ENCODE measurements at regions of chr7 and their contacts with region 1.

Region 1: GRCh38 chr7:24955313-24955712 is 24.7 kb downstream of the OSBPL3 start:
- DNase-seq: no peak
- H3K4me3 Mint-ChIP-seq: no peak overlapping the region
- H3K27ac Mint-ChIP-seq: no peak overlapping the region
- H3K4me1 Mint-ChIP-seq: peaks cover 49% of the 10 kb centered on the region
- H3K27me3 Mint-ChIP-seq: no peaks in the 10 kb centered on the region

Region 2: DNA sequence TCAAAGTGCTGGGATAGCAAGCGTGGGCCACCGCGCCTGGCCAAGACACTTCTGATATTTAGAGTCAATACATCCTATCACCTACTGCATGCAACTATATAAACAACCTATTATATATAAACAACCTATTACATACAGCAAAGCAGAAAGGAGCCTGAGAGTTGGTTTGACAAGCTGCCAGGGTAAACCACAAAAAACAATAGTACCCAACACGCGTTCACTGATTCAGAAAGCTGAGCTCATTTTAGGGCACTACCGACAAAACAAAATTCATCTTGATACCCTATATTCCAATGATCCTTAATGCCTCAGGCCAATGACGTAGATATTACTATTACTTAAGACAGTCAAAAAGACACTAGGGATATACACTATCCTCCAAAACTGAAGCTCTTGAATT is 1639.9 kb before region 1 on chr7:
- intact Hi-C with region 1: no loop called
- DNase-seq: no peak
- H3K4me3 Mint-ChIP-seq: no peak overlapping the region
- H3K27ac Mint-ChIP-seq: no peak overlapping the region
- H3K4me1 Mint-ChIP-seq: no peaks in the 10 kb centered on the region
- H3K27me3 Mint-ChIP-seq: no peaks in the 10 kb centered on the region

Region 3: DNA sequence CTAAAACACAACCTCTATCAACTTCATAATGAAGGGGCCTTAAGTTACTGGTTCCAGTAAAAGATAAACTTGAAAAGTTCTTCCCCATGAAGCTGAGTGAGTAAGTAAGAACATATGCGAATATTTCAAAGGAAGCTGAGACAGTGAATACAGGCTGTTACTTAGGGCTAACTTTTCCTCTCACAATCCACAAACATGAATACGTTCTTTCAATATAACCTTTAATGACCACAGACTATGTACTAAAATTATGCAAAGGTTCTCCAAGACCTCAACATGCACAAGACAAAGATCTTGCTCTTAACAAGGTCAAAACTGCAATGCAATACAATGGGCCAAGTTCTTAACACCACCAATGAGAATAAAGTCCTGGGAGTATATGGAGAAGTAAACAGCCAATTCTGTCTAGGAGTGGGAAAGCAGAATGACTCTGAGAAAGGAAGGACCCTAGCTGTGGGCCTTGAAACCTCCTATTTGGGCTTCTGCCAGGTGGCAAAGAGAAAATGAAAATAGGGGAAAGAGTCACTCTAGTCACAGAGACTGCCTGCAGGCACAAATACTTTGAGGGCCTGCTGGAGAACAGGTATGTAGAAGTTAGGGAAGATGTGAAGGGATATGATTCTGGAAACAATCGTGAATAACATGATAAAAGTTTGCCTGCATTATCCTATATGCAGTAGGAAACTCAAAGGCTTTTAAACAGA is 19.0 kb before region 1 on chr7:
- intact Hi-C with region 1: loop called (anchors 2 kb)
- DNase-seq: no peak
- H3K4me3 Mint-ChIP-seq: no peak overlapping the region
- H3K27ac Mint-ChIP-seq: peak overlapping the region; percentile 57
- H3K4me1 Mint-ChIP-seq: peaks cover 57% of the 10 kb centered on the region
- H3K27me3 Mint-ChIP-seq: no peaks in the 10 kb centered on the region

Measured in activated CD4-positive, alpha-beta T cell treated with anti-CD3 and anti-CD28 coated beads, Interleukin-2, amount 10 ng/mL, durations not matched to agents 24 days and 14 days (primary cell).